ENCODE measurements at regions of chr9 and their contacts with region 1.

Region 1: GRCh38 chr9:92634712-92635605 is 35.0 kb downstream of the IPPK start:
- DNase-seq: peak; percentile 41
- ATAC-seq: peak; percentile 96
- H3K4me3 ChIP-seq: no peak overlapping the region
- H3K27ac ChIP-seq: no peak overlapping the region
- H3K4me1 ChIP-seq: no peaks in the 10 kb centered on the region
- H3K27me3 ChIP-seq: no peaks in the 10 kb centered on the region
- CTCF ChIP-seq: peak; percentile 96 to 97 (median 97)
- POLR2A ChIP-seq: no peak
- RAD21 ChIP-seq: peak; percentile 91

Region 2: DNA sequence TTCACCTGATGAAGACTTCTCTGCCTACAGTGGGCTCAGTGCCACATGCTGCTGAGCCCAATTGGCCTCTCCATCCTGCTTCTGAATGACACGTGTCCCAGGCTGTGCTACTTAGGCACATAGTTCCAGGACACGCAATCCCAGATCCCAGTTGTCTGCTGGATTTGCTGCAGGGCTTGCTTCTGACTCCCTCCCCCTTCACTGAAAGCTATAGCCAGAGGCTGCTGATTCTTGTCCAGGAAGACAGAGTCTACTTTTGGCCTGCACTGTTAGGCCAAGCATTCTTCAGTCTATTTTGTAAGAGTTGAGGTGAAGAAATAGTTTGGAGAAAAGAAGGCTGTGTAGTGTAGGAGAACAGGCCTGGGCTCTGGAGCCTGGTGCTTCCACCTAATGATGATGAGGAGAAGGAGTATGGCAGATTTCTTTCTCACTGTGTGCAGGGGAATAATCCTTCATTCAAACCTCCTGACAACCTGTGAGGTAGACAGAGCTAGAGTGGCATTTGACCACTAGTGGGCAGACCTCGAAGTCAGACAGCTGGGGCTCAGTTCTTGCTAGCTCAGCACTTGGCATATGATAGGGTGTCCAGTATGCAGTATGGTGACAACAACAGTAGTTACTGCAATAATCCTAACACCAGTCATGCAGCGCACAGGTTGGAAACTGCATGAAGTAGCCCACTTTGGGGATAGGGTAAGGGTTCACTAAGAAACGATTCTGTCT is 133.1 kb before region 1 on chr9:
- CTCF ChIA-PET with region 1: no interaction called
- POLR2A ChIA-PET with region 1: no interaction called
- RAD21 ChIA-PET with region 1: no interaction called
- intact Hi-C with region 1: loop called (anchors 1 kb)
- DNase-seq: peak; percentile 52
- ATAC-seq: peak; percentile 99
- H3K4me3 ChIP-seq: no peak overlapping the region
- H3K27ac ChIP-seq: no peak overlapping the region
- H3K4me1 ChIP-seq: peaks cover 0 to 11% of the 10 kb centered on the region in 2 experiments; a peak in 3 of 4 replicates
- H3K27me3 ChIP-seq: no peaks in the 10 kb centered on the region
- CTCF ChIP-seq: peak; percentile 46 to 88 (median 85); a peak in 5 of 6 replicates
- POLR2A ChIP-seq: no peak
- RAD21 ChIP-seq: peak; percentile 41; the same call in 1 of the 2 replicates

Region 3: GRCh38 chr9:92547356-92547755 is 87.6 kb before region 1 on chr9:
- CTCF ChIA-PET with region 1: no interaction called
- POLR2A ChIA-PET with region 1: no interaction called
- RAD21 ChIA-PET with region 1: no interaction called
- intact Hi-C with region 1: no loop called
- DNase-seq: no peak
- ATAC-seq: no peak
- H3K4me3 ChIP-seq: no peak overlapping the region
- H3K27ac ChIP-seq: no peak overlapping the region
- H3K4me1 ChIP-seq: no peaks in the 10 kb centered on the region
- H3K27me3 ChIP-seq: no peaks in the 10 kb centered on the region
- CTCF ChIP-seq: no peak
- POLR2A ChIP-seq: no peak
- RAD21 ChIP-seq: no peak

Region 4: DNA sequence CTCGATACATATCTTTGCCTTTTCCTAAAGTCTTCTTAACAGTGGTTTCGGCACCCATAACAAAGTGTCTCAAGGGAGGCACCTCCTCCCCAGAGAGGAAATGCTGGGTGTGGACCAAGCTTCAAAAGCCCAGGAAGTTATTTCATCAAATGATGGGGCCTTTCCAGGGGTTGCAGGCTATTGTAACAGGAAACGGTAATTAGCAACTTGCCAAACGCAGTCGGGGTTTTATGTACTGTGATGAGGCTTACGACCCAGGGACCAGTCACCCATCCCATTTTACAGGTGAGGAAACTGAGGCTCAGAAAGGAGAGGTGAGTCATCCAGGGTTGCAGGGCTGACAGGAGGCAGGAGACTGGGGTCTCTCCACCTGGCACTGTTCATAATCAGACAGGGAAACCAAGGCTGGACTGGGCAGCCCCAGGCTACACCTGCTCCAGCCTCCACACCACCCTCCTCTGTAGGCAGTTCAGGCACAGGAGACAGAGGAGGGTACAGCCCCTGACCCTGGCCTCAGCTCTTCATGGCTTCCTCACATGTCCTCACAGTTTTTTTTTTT is 393.6 kb after region 1 on chr9:
- CTCF ChIA-PET with region 1: no interaction called
- POLR2A ChIA-PET with region 1: no interaction called
- RAD21 ChIA-PET with region 1: no interaction called
- intact Hi-C with region 1: no loop called
- DNase-seq: no peak
- ATAC-seq: peak; percentile 9; the same call in 1 of the 2 replicates
- H3K4me3 ChIP-seq: no peak overlapping the region
- H3K27ac ChIP-seq: no peak overlapping the region
- H3K4me1 ChIP-seq: no peaks in the 10 kb centered on the region
- H3K27me3 ChIP-seq: no peaks in the 10 kb centered on the region
- CTCF ChIP-seq: no peak
- POLR2A ChIP-seq: no peak
- RAD21 ChIP-seq: no peak

Region 5: GRCh38 chr9:93415176-93415690 is 780.3 kb after region 1 on chr9:
- CTCF ChIA-PET with region 1: no interaction called
- POLR2A ChIA-PET with region 1: no interaction called
- RAD21 ChIA-PET with region 1: no interaction called
- intact Hi-C with region 1: no loop called
- DNase-seq: no peak
- ATAC-seq: no peak
- H3K4me3 ChIP-seq: no peak overlapping the region
- H3K27ac ChIP-seq: no peak overlapping the region
- H3K4me1 ChIP-seq: no peaks in the 10 kb centered on the region
- H3K27me3 ChIP-seq: no peaks in the 10 kb centered on the region
- CTCF ChIP-seq: no peak
- POLR2A ChIP-seq: no peak
- RAD21 ChIP-seq: no peak

Measured in HCT116 (cell line).